GM13976 (cell line): ENCODE measurements at regions of chr3 and their contacts with region 1.

Region 1: DNA sequence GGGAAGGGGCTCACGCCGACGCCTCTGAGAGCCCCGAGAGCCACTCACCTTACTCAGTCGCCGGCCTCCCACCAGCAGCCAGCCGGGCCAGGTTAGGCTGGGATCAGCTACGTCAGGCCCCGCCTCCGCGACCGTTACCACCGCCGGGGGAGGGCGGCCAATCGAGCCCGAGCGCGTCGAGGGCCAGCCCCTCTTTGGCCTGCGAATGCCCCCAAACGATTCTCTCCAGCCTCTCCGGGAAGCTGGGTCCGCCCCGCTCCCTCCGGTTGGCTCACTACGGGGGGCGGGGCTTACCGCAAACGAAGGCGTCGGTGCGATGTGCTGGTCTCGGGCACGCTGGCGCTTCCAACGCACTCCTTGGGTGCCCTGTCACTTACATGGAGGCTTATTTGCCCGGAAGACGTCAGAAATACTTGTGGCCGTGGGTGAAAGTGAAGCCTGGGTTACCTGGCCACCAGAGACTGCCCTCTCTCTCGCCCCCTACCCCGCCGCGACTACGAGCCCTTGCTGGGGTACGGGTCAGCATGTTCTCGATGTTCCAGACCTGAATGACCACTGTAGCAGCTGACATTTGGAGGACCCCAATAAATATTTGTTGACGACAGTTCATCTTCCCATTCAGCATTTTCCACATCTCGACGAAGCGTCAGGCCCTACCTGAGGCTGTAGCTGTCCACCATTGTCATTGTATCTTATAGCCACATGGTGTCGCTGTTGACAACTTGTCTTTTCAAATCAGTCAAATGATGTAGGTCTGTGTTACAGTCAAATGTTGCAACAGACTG is at the start of gene CEP70:
- DNase-seq: peak; percentile 84
- CTCF ChIP-seq: peak; percentile 64

Region 2: GRCh38 chr3:138686771-138687221 is 92.5 kb after region 1 on chr3:
- in situ Hi-C with region 1: loop called (anchors 10 kb)
- DNase-seq: peak; percentile 54
- CTCF ChIP-seq: no peak

Region 3: GRCh38 chr3:138915503-138916498 is 321.5 kb after region 1 on chr3:
- in situ Hi-C with region 1: loop called (anchors 5 kb)
- DNase-seq: peak; percentile 91
- CTCF ChIP-seq: peak; percentile 92

Region 4: GRCh38 chr3:139044366-139045210 is 450.2 kb after region 1 on chr3 and contains the start of gene PRR23C:
- in situ Hi-C with region 1: no loop called
- DNase-seq: no peak
- CTCF ChIP-seq: no peak